Left cardiac atrium (tissue), 4 donors: ENCODE measurements at regions of chr17 and their contacts with region 1.

Region 1: GRCh38 chr17:82164853-82165252 is 47.8 kb downstream of the CCDC57 start:
- DNase-seq: no peak
- ATAC-seq: no peak

Region 2: DNA sequence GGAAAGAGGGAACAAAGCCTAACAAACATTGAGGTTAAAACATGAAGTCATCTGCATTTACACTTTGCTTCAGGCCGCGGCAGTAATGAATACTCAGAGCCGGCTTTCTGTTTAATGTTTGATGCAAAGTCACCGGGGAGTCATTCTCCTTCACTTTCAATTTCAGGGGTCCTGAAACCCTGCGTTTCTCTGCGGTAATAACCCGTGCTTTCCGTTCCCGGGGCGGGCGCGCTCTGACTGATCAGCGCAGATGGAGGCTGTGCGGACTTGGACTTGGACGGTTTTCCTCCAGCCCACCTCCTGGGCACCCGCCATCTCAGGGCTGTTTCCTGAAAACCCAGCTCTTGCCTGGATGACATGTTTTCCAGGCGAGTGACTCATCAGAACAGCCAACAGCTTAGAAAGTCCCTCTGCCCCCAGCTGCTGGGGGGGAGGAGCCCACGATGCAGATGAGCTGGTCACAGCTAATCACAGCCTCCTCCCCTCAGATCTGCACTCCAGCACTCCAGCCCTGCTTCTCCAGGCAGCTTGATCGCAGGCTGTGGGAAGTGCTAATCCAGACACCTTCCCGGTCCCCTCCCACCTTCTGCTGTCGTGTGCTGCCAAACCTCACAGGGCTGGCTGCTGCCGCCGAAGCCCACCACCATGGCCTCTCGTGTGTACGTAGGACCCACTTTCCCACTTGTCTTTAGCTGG is 1331.8 kb before region 1 on chr17:
- intact Hi-C with region 1: no loop called
- DNase-seq: peak; percentile 90
- ATAC-seq: peak; percentile 95 to 98

Region 3: GRCh38 chr17:82120148-82120547 is 44.7 kb before region 1 on chr17:
- intact Hi-C with region 1: no loop called
- DNase-seq: no peak
- ATAC-seq: no peak

Region 4: GRCh38 chr17:82145550-82146190 is 19.2 kb before region 1 on chr17:
- intact Hi-C with region 1: loop called in 1 of 2 experiments (anchors 2 kb)
- DNase-seq: no peak
- ATAC-seq: no peak